K562 (cell line): ENCODE measurements at regions of chr7 and their contacts with region 1.

Region 1: GRCh38 chr7:55641273-55641691 is 69.0 kb upstream of the VOPP1 start:
- DNase-seq: peak; percentile 23 to 68 (median 30)
- ATAC-seq: peak; percentile 89
- H3K4me3 ChIP-seq: no peak overlapping the region
- H3K27ac ChIP-seq: no peak overlapping the region
- H3K4me1 ChIP-seq: no peaks in the 10 kb centered on the region
- H3K27me3 ChIP-seq: peaks cover 0 to 8% of the 10 kb centered on the region in 2 experiments; a peak in 4 of 5 replicates
- CTCF ChIP-seq: peak; percentile 58 to 89 (median 68); a peak in 5 of 6 replicates
- EP300 ChIP-seq: no peak
- POLR2A ChIP-seq: no peak
- RAD21 ChIP-seq: peak; percentile 87 to 95

Region 2: GRCh38 chr7:55657654-55658053 is 16.4 kb after region 1 on chr7:
- CTCF ChIA-PET with region 1: no interaction called
- POLR2A ChIA-PET with region 1: no interaction called
- in situ Hi-C with region 1: no loop called
- intact Hi-C with region 1: no loop called
- DNase-seq: peak in 1 of 4 experiments; percentile 36
- ATAC-seq: peak; percentile 23; the same call in 1 of the 3 replicates
- H3K4me3 ChIP-seq: no peak overlapping the region
- H3K27ac ChIP-seq: no peak overlapping the region
- H3K4me1 ChIP-seq: no peaks in the 10 kb centered on the region
- H3K27me3 ChIP-seq: peaks cover 0 to 6% of the 10 kb centered on the region in 2 experiments; a peak in 1 of 5 replicates
- CTCF ChIP-seq: no peak
- EP300 ChIP-seq: 0 out of 2 replicates have a peak, but pooled peaks have one; percentile 19
- POLR2A ChIP-seq: no peak
- RAD21 ChIP-seq: no peak

Region 3: DNA sequence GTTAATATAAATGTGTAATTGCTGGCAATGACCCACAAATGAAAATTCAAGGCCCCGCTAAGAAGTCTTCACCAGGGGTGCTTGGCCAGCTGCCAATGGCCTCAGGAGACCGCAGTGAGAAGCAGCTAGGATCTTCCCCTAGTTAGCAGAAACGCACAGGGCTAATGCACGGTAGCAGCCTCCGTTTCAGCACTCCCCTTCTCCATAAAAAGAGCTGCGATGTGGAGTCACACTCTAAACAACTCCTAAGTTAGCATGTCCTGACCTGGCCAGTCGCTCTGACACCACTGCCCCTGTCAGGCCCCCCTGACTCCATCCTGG is 82.3 kb after region 1 on chr7:
- CTCF ChIA-PET with region 1: no interaction called
- POLR2A ChIA-PET with region 1: no interaction called
- in situ Hi-C with region 1: loop called (anchors 10 kb)
- intact Hi-C with region 1: no loop called
- DNase-seq: no peak
- ATAC-seq: no peak
- H3K4me3 ChIP-seq: no peak overlapping the region
- H3K27ac ChIP-seq: no peak overlapping the region
- H3K4me1 ChIP-seq: no peaks in the 10 kb centered on the region
- H3K27me3 ChIP-seq: no peaks in the 10 kb centered on the region
- CTCF ChIP-seq: no peak
- EP300 ChIP-seq: no peak
- POLR2A ChIP-seq: no peak
- RAD21 ChIP-seq: no peak

Region 4: GRCh38 chr7:55964261-55965099 is 323.2 kb after region 1 on chr7 and contains the start of gene NIPSNAP2:
- CTCF ChIA-PET with region 1: no interaction called
- POLR2A ChIA-PET with region 1: no interaction called
- in situ Hi-C with region 1: no loop called
- intact Hi-C with region 1: loop called (anchors 5 kb)
- DNase-seq: peak; percentile 87 to 94 (median 92)
- ATAC-seq: peak; percentile 95
- H3K4me3 ChIP-seq: peak within 1 kb of the TSS; percentile 91
- H3K27ac ChIP-seq: peak within 1 kb of the TSS; percentile 90
- H3K4me1 ChIP-seq: peaks cover 12 to 13% of the 10 kb centered on the region in 2 experiments; a peak in 4 of 5 replicates
- H3K27me3 ChIP-seq: no peaks in the 10 kb centered on the region
- CTCF ChIP-seq: peak in 2 of 3 experiments; percentile 57 to 75; a peak in 4 of 6 replicates
- EP300 ChIP-seq: no peak
- POLR2A ChIP-seq: peak; percentile 74; the same call in 1 of the 2 replicates
- RAD21 ChIP-seq: peak in 1 of 2 experiments; percentile 68; a peak in 3 of 4 replicates
- polyA plus RNA-seq, gene NIPSNAP2: 24.9 to 30.4 TPM

Region 5: DNA sequence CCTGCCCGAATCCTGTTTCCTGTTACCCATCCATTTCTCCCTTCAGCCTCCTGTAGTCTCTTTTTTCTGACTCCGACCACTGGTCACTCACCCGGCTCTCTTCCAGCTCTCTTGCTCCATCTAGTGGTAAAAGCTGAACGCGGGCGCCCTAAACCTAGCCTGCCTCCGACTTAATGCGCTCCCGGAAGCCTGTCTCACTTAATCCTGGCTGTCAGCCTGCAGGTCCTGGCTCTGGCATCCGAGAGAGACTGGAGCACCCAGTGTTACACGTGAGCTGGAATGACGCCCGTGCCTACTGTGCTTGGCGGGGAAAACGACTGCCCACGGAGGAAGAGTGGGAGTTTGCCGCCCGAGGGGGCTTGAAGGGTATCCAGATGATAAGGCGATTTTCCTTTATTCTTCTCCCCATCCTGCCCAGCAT is 433.1 kb after region 1 on chr7:
- CTCF ChIA-PET with region 1: interaction called, 8 read pairs
- POLR2A ChIA-PET with region 1: no interaction called
- in situ Hi-C with region 1: no loop called
- intact Hi-C with region 1: loop called (anchors 5 kb)
- DNase-seq: peak; percentile 74 to 82 (median 80)
- ATAC-seq: peak; percentile 96
- H3K4me3 ChIP-seq: no peak overlapping the region
- H3K27ac ChIP-seq: no peak overlapping the region; the same call in 2 of the 3 replicates
- H3K4me1 ChIP-seq: peaks cover 0 to 5% of the 10 kb centered on the region in 2 experiments; a peak in 1 of 5 replicates
- H3K27me3 ChIP-seq: no peaks in the 10 kb centered on the region
- CTCF ChIP-seq: peak; percentile 86 to 92 (median 88)
- EP300 ChIP-seq: no peak
- POLR2A ChIP-seq: 0 out of 2 replicates have a peak, but pooled peaks have one; percentile 29
- RAD21 ChIP-seq: peak; percentile 88 to 91